ENCODE measurements at regions of chr6 and their contacts with region 1.

Region 1: DNA sequence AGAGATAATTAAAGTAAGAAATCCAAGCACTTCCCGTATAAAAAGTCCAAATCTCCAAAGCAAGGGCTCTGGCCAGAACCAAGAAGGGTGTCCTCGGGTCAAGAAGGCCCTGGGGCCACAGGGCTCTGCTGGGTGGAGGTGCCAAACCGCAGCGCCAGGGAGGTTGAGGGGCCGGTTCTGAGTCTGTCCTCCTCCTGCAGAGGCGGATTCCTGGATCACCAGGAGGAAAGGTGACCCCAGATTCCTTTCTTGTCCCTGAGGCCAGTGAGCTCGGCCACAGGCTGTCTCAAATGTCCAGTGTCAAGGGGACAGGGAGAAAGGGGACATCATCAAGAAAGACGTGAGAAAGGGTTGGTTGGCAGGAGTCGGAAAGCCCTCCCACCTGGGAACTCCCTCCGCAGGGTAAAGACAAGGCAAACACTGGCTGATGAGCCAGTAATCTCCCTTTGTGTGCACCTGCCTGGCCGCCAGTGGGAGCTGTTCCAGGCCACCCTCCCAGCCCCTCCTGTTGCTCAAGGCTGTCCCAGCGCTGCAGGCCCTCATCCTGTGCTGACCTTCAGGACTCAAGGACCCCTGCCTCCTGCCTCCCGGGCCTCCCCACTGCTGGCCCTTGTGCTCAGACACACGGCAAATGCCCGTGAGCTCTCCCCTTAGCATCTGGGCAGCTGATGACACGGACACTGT is 7.5 kb downstream of the FRMD1 start:
- DNase-seq: peak in 1 of 2 experiments; percentile 74
- H3K4me3 ChIP-seq: no peak overlapping the region
- H3K27ac ChIP-seq: no peak overlapping the region
- H3K4me1 ChIP-seq: peaks cover 0 to 6% (median 1%) of the 10 kb centered on the region in 4 experiments; a peak in 2 of 7 replicates
- H3K27me3 ChIP-seq: no peaks in the 10 kb centered on the region
- CTCF ChIP-seq: peak; percentile 82 to 92 (median 89)
- EP300 ChIP-seq: no peak
- POLR2A ChIP-seq: no peak
- RAD21 ChIP-seq: peak; percentile 51 to 68

Region 2: GRCh38 chr6:168088161-168089053 is 16.9 kb after region 1 on chr6:
- CTCF ChIA-PET with region 1: interaction called, 12 read pairs
- POLR2A ChIA-PET with region 1: no interaction called
- DNase-seq: no peak
- H3K4me3 ChIP-seq: no peak overlapping the region
- H3K27ac ChIP-seq: no peak overlapping the region
- H3K4me1 ChIP-seq: peaks cover 0 to 30% (median 13%) of the 10 kb centered on the region in 4 experiments; a peak in 6 of 7 replicates
- H3K27me3 ChIP-seq: peaks cover 0 to 2% (median 0%) of the 10 kb centered on the region in 4 experiments; a peak in 2 of 7 replicates
- CTCF ChIP-seq: no peak
- EP300 ChIP-seq: no peak
- POLR2A ChIP-seq: no peak
- RAD21 ChIP-seq: no peak

Region 3: DNA sequence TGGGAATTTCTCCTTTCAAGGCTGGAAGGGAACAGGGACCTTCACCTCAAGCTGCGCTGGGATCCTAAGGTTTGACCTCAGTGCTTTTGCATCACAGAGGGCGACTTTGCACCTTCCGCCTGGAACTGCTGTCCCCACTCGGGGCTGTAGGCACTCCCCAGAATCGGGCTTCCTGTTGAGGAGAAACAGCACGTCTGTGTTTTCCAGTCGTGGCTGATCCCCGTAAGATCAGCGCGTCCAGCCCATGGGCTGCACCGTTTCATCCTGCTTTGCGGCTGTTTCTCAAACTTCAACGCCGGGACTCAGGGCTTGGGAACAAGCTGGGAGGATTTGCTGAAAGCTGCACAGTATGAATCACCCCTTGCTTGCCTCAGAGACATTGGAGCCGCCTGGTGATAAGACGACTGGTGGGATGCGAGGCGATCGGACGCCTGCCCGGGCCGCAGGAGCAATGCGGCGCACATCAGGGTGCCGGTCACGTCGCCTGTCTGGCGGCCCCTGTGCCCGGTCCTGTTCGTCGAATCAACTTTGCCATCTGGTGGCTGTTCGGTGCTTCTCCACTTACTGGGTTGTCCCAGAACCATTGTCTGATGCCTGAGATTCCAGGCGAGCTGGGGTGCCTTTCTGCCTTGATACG is 61.2 kb after region 1 on chr6:
- CTCF ChIA-PET with region 1: interaction called, 30 read pairs
- POLR2A ChIA-PET with region 1: no interaction called
- DNase-seq: peak; percentile 39 to 81
- H3K4me3 ChIP-seq: peak overlapping the region in 1 of 4 experiments; percentile 25; a peak in 2 of 8 replicates
- H3K27ac ChIP-seq: no peak overlapping the region
- H3K4me1 ChIP-seq: peaks cover 7 to 18% (median 12%) of the 10 kb centered on the region in 4 experiments
- H3K27me3 ChIP-seq: peaks cover 0 to 12% (median 10%) of the 10 kb centered on the region in 4 experiments; a peak in 5 of 7 replicates
- CTCF ChIP-seq: peak in 2 of 3 experiments; percentile 71 to 81; a peak in 3 of 4 replicates
- EP300 ChIP-seq: no peak
- POLR2A ChIP-seq: no peak
- RAD21 ChIP-seq: peak; percentile 80 to 87